ENCODE measurements at regions of chr7 and their contacts with region 1.

Region 1: GRCh38 chr7:149838224-149838947 is at the start of gene ZNF862:
- DNase-seq: peak; percentile 96
- H3K4me3 Mint-ChIP-seq: peak within 1 kb of the TSS; percentile 76
- H3K27ac Mint-ChIP-seq: peak within 1 kb of the TSS; percentile 80
- H3K4me1 Mint-ChIP-seq: peaks cover 26% of the 10 kb centered on the region
- H3K27me3 Mint-ChIP-seq: no peaks in the 10 kb centered on the region
- total RNA-seq, gene ZNF862: 17.6 to 19.4 TPM

Region 2: GRCh38 chr7:148584154-148584827 is 1254.1 kb before region 1 on chr7:
- CTCF ChIA-PET with region 1: no interaction called
- intact Hi-C with region 1: no loop called
- DNase-seq: peak; percentile 42
- H3K4me3 Mint-ChIP-seq: no peak overlapping the region
- H3K27ac Mint-ChIP-seq: no peak overlapping the region
- H3K4me1 Mint-ChIP-seq: peaks cover 17% of the 10 kb centered on the region
- H3K27me3 Mint-ChIP-seq: no peaks in the 10 kb centered on the region

Region 3: DNA sequence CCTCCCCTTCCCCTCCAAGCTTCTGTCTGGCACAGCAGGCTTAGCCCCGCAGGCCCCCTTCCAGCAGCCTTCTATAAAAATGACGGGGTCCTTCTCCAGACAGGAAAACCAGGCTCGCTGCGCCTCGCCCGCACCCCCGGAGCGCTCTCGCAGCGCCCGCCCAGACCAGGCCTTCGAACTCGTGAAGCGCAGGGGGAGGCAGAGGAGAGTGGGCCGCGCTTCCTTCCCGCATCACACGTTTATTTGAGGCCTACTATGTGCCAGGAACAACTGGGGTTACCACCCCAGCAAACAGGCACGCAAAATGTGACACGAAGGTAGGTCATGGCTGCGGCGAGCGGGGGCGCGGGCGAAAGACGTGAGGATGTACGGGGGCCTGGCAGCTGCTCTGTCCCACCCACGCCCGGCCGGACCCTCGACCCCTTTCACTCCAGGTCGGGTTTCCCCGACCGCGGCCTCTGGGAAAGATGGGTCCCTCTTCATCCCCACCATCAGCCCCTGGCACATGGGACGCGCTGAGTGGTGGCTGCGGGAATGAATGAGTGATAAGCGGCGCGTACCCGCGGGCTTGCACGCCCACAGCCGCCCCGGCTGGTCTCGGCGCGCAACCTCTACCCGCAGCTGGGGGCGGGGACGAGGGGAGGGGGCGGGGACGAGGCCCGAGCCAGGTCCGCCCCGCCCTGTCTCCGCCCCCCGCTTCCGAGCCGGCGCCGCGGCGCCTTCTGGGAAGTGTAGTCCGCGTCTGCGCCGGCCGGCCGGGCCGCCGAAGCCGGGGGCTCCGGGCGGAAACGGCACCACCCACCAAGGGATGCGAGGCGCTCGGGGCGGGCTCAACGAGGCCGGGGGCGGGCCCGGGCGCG is 124.1 kb before region 1 on chr7:
- CTCF ChIA-PET with region 1: no interaction called
- intact Hi-C with region 1: loop called (anchors 2 kb)
- DNase-seq: peak; percentile 94
- H3K4me3 Mint-ChIP-seq: peak overlapping the region; percentile 73
- H3K27ac Mint-ChIP-seq: no peak overlapping the region
- H3K4me1 Mint-ChIP-seq: peaks cover 17% of the 10 kb centered on the region
- H3K27me3 Mint-ChIP-seq: no peaks in the 10 kb centered on the region

Measured in activated naive CD4-positive, alpha-beta T cell treated with anti-CD3 and anti-CD28 coated beads for 36 hours (primary cell).